Tibial artery (tissue), 4 donors: ENCODE measurements at regions of chr21 and their contacts with region 1.

Region 1: DNA sequence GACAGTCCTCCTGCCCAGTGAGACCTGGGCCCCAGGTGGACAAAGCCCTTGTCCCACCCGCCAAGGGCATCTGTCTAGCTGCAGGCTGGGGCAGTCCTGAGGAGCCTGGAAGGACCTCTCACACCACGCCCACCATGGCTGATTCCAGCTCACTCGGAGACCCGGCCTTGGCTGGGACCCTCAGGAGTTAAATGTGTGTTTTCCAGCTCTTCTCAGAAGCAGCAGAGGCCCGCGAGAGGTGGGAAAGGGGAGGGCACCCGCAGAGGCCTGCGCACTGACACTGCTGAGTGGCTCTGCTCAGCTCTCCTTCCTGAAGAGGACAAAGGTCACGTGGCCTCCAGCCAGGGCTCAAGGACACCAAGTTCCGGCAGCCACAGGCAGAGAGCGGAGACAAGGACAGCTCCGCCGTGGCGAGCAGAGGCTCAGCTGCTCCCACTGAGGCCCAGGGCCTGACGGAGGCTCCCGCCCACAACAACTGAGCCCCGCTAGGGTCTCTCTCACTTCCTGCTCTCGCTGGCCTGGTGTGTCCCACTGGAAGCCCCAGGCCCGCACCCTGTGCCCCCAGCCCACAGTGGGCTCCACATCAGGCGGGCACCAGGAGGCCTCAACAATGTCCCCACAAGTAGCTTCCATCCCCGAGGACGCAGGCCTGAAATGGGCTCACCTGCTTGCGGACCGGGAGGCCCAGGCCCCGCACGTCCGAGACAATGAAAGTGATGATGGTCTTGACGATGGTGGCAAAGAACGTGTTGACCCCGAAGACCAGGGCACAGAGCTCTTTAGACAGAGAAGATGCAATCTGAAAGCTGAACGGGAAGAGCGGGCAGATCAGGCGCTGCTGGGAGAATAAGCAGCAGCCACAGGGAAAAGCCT is 16.9 kb downstream of the SLC19A1 start:
- DNase-seq: peak in 1 of 2 donors; percentile 64
- H3K4me3 ChIP-seq: no peak overlapping the region
- H3K27ac ChIP-seq: no peak overlapping the region
- H3K4me1 ChIP-seq: no peaks in the 10 kb centered on the region
- H3K27me3 ChIP-seq: no peaks in the 10 kb centered on the region
- CTCF ChIP-seq: no peak

Region 2: DNA sequence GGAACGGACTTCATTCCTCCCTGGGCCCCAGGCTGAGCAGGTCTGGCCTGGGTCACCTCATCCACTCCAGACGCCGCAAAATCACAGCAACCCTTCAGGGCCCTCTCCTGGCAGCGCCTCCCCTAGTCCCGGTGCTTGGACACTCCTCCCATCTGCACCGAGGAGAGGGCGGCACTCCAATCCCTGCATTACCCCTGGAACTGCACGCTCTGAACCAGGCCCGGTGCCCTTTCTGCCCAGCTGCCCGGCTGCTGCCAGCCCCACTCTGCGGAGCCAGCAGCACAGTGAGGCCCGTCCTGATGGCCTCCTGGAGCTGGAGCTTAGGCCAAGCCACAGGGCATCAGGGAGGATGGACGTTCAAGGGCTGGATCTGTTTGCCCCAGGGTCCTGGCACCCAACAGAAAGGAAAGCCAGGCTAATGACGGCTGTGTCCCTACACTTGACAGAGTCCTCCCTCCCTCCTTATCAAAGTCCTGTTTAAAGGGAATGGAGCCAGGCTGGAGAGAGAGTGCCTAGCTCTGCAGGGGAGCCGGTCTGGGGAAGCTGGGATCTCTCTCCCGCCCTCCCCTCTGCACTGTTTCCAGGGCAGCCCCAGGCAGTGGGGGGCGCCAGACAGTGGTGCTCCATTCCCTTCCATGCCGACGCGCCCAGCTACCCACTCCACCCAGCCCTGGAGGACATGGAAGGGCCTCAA is 585.3 kb after region 1 on chr21:
- intact Hi-C with region 1: loop called (anchors 10 kb)
- DNase-seq: peak; percentile 58 to 83
- H3K4me3 ChIP-seq: no peak overlapping the region
- H3K27ac ChIP-seq: peak overlapping the region; percentile 57 to 64
- H3K4me1 ChIP-seq: peaks cover 0 to 49% (median 25%) of the 10 kb centered on the region in 4 donors
- H3K27me3 ChIP-seq: no peaks in the 10 kb centered on the region
- CTCF ChIP-seq: peak; percentile 24